Esophagus muscularis mucosa (tissue), 4 donors: ENCODE measurements at regions of chr1 and their contacts with region 1.

Region 1: GRCh38 chr1:193104906-193105820 is at the start of gene GLRX2:
- DNase-seq: peak; percentile 96
- H3K4me3 ChIP-seq: peak within 1 kb of the TSS; percentile 72 to 88 (median 81)
- H3K27ac ChIP-seq: peak within 1 kb of the TSS; percentile 91 to 96 (median 92)
- H3K4me1 ChIP-seq: peaks cover 17 to 28% (median 22%) of the 10 kb centered on the region in 4 donors
- H3K27me3 ChIP-seq: no peaks in the 10 kb centered on the region
- CTCF ChIP-seq: peak in 1 of 3 experiments; percentile 36
- EP300 ChIP-seq: no peak
- POLR2A ChIP-seq: peak; percentile 42
- total RNA-seq, gene GLRX2: 8.1 to 12.1 (median 10.0) TPM

Region 2: DNA sequence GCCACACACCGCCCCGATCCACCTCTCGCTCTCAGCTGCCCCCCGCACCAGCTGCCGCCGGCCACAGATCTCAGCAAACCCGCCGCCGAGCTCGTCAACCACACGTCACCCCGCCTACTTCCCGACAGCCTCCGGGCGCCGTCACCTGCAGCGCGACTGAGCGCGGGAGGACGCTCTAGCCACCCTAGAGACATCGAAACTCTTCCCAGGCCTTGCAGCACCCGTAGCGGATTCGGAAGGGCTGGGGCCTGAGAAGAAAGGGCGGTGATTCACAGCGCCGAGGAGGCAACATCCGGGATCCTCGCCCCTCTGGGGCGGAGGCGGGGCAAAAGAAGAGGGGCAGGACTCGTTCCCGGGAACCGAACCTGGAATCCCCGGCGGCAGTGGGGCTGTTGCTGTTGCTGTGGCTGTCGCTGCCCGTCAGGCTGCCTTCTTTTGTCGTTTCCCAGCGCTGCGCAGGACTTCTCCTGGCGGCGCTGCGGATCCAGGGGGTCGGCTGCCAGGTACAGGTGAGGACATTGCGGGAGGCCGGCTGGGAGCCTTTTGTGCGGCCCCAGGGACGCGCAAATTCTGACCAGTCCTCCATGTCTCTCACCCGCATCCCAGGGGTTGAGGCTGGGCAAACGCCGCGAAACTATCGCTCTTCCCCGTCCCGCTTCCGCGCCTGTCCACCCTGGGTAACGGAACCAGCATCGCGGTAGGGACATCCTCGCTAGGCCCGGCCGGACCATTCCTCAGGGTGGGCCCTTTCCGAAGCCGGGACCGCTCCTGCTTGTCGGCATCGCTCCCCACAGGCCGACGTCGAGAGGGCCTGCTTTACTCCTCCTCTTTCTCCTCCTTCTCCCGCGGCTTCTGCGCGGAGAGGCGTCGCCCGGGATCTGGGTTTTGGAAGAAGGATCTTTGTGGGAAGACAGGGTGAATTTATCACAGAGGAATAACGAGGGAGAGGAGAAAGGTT is 45.6 kb before region 1 on chr1 and contains the starts of genes RO60 and UCHL5:
- intact Hi-C with region 1: loop called (anchors 5 kb)
- DNase-seq: peak; percentile 98
- H3K4me3 ChIP-seq: peak within 1 kb of the TSS; percentile 73 to 87 (median 84)
- H3K27ac ChIP-seq: peak within 1 kb of the TSS; percentile 97 to 98 (median 98)
- H3K4me1 ChIP-seq: peaks cover 26 to 58% (median 49%) of the 10 kb centered on the region in 4 donors
- H3K27me3 ChIP-seq: no peaks in the 10 kb centered on the region
- CTCF ChIP-seq: peak in 1 of 3 experiments; percentile 35
- EP300 ChIP-seq: no peak
- POLR2A ChIP-seq: peak; percentile 55
- total RNA-seq, gene RO60: 112 to 277 (median 168) TPM
- total RNA-seq, gene UCHL5: 24.0 to 33.8 (median 28.8) TPM

Region 3: DNA sequence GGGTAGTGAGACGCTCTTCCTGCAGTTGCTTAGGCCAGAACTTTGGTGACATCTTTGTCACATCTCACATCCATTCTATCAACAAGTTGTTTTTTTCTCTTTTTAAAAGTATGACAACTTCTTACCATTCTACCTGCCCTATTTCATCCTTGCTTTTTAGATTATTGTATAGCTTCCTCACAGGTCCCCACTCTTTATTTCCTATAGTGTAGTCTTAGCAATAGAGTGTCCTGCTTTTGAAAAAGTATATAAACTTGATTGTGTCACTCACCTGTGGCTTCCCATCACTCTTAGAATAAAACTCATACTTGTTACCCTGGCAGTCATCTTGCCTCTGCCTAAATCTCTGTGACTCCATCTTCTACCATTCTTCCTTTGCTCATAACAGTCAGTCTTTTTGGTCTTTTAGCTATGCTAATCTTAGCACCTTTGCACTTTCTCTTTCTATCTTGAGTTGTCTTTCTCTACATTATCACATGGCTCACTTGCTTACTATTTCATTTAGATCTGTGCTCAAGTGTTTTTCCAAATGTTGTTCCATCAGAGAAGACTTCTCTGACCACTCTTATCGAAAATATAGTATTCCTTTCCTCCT is 26.2 kb after region 1 on chr1:
- intact Hi-C with region 1: no loop called
- DNase-seq: no peak
- H3K4me3 ChIP-seq: no peak overlapping the region
- H3K27ac ChIP-seq: no peak overlapping the region
- H3K4me1 ChIP-seq: peaks cover 0 to 25% (median 14%) of the 10 kb centered on the region in 4 donors
- H3K27me3 ChIP-seq: no peaks in the 10 kb centered on the region
- CTCF ChIP-seq: no peak
- EP300 ChIP-seq: no peak
- POLR2A ChIP-seq: no peak